Mammary epithelial cell (primary cell): ENCODE measurements at regions of chr3 and their contacts with region 1.

Region 1: DNA sequence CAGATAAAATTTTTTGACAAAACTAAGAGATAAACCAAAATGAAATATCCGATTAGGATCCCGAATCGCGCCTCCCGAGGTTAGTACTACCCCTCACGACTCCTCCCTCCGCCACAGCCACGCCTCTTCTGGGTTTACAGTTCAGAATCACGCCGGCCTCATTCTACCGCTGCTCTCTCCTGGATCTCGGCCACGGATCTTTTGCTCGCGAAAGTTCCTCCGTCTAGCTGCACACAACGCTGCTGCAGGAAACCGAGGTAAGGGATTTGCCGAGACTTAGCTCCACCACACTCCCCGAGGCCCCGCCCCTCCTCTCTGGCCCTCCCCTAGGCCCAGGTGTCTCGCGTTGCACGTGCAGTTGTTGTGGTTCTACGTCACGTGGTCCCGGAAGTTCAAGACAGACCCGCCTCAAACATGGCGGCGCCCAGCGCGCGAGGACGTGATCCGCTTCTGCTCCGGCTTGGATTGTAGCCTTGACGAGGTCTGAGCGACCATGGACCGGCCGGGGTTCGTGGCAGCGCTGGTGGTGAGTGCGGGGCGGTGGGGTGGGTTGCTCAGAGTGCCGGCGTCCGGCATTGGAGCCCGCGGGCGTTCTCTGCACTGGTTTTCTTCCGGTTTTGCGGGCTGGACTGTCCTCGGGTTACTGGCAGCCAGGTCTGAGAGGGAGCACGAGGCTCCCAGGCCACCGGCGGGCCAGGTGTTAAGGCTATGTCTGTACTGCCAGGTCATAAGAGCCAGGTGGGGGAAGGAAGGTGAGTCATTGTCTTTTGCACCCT is at the start of gene SLC25A26:
- DNase-seq: peak; percentile 98
- H3K4me3 ChIP-seq: peak within 1 kb of the TSS; percentile 91 to 96 (median 95)
- H3K27ac ChIP-seq: peak within 1 kb of the TSS; percentile 87
- H3K4me1 ChIP-seq: peaks cover 9% of the 10 kb centered on the region
- H3K27me3 ChIP-seq: no peaks in the 10 kb centered on the region
- CTCF ChIP-seq: no peak
- total RNA-seq, gene SLC25A26: 20.3 to 25.8 TPM

Region 2: GRCh38 chr3:65048151-65048550 is 1172.6 kb before region 1 on chr3:
- CTCF ChIA-PET with region 1: no interaction called
- dilution Hi-C with region 1: no loop called
- in situ Hi-C with region 1: no loop called
- intact Hi-C with region 1: loop called (anchors 5 kb)
- DNase-seq: peak; percentile 68
- H3K4me3 ChIP-seq: peak overlapping the region in 1 of 3 experiments; percentile 18
- H3K27ac ChIP-seq: peak overlapping the region; percentile 33
- H3K4me1 ChIP-seq: peaks cover 20% of the 10 kb centered on the region
- H3K27me3 ChIP-seq: no peaks in the 10 kb centered on the region
- CTCF ChIP-seq: no peak

Region 3: GRCh38 chr3:66115858-66116654 is 104.7 kb before region 1 on chr3:
- CTCF ChIA-PET with region 1: no interaction called
- dilution Hi-C with region 1: no loop called
- in situ Hi-C with region 1: no loop called
- intact Hi-C with region 1: no loop called
- DNase-seq: peak; percentile 88
- H3K4me3 ChIP-seq: no peak overlapping the region
- H3K27ac ChIP-seq: peak overlapping the region; percentile 53
- H3K4me1 ChIP-seq: peaks cover 16% of the 10 kb centered on the region
- H3K27me3 ChIP-seq: no peaks in the 10 kb centered on the region
- CTCF ChIP-seq: no peak